Posterior vena cava (tissue), 2 donors: ENCODE measurements at regions of chr12 and their contacts with region 1.

Region 1: GRCh38 chr12:26884765-26885576 is 52.0 kb upstream of the ITPR2 start:
- DNase-seq: peak; percentile 89

Region 2: DNA sequence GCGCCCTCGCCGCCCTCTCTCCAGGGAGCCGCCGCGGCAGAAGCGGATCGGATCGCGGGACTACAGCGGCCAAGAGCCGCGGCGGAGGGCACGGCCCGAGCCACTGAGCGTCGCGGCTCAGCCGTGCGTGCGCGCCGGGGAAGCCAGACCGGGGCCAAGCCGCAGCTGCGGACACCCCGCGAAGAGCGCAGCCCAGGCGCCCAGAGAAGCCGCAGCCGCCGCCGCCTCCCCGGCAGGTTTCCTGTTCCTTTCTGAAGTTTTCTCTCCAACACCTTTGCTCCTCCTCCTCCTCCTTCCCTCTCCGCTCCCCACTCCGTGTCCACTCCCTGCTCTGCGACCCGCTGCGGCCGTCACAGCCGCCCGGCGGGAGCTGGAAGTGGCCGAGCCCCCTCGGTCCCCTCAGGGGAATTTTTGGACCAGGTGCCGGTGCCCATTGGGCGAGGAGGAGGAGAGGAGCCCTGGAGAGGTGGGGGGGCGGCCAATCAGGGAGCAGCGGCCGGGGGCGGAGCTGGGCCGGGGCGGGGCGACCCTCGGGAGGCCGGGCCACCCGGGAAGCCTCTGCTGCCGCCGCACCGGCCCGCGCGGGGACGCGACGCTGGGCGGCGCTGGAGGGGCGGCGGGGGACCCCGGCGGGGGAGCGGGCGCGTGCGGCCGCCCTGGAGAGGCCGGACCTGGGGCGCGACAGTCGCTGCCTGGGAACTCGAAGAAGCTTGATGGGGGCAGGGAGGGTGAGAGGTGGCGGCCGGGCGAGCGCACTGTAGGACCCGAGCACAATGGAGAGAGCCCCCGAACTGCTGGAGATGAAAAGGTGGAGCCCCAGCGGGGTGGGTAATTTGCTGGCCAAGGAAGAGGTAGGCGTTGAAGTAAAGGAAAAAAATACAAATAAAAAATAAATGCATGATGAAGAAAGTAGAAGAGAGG is 51.9 kb before region 1 on chr12 and contains the start of gene ITPR2:
- intact Hi-C with region 1: loop called in 1 of 2 experiments (anchors 5 kb)
- DNase-seq: peak; percentile 97
- total RNA-seq, gene ITPR2: 38.8 to 40.3 TPM

Region 3: GRCh38 chr12:26843311-26843710 is 41.7 kb before region 1 on chr12:
- intact Hi-C with region 1: no loop called
- DNase-seq: no peak

Region 4: GRCh38 chr12:26853303-26854030 is 31.5 kb before region 1 on chr12:
- intact Hi-C with region 1: loop called in 1 of 2 experiments (anchors 5 kb)
- DNase-seq: peak; percentile 86